Activated naive CD4-positive, alpha-beta T cell treated with anti-CD3 and anti-CD28 coated beads, Interleukin-2, amount 10 ng/mL, durations not matched to agents 7 days and 5 days (primary cell): ENCODE measurements at regions of chr14 and their contacts with region 1.

Region 1: DNA sequence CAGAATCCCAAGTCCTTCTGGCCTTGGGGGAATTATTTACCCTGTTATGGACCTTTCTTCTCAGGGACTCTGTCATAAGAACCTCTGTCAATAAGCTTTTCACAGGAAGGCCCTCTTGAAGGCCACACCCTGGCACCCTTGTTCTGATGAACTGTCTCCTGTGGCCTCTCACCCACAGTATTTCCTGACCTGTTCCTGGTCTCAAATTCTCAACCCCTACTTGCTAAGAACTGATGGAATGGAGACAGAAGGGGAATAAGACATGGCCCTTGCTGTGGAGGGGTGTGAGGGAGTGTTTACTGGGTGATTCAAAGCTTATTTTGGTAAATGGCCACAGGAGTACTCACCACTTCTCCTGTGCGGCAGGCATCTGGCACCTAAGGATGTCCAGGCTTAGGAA is 1082.9 kb downstream of the BCL11B start:
- DNase-seq: peak; percentile 60
- H3K4me3 Mint-ChIP-seq: peak overlapping the region; percentile 54
- H3K27ac Mint-ChIP-seq: peak overlapping the region; percentile 97
- H3K4me1 Mint-ChIP-seq: peaks cover 99% of the 10 kb centered on the region
- H3K27me3 Mint-ChIP-seq: no peaks in the 10 kb centered on the region

Region 2: DNA sequence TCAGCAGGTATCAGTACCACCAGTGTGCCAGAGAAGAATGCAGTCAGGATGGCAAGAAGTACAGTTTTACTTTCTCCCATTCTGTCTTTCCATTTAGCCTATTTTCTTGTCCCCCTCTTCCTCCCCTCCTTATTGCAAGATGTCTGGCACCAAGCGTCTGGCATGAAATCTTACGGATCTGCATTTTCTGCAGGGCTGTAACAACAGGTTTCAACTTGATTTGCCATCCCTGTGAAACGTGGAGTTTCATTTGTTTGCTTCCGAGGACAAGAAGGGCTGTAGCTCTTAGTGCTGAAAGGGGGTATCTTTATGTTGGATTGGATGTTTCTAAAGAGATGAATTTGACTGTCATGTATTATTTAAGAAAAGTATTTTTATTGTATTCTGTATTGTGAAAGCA is 27.7 kb before region 1 on chr14:
- CTCF ChIA-PET with region 1: no interaction called
- DNase-seq: no peak
- H3K4me3 Mint-ChIP-seq: no peak overlapping the region
- H3K27ac Mint-ChIP-seq: no peak overlapping the region
- H3K4me1 Mint-ChIP-seq: peaks cover 45% of the 10 kb centered on the region
- H3K27me3 Mint-ChIP-seq: no peaks in the 10 kb centered on the region

Region 3: GRCh38 chr14:98174041-98174440 is 15.0 kb before region 1 on chr14:
- CTCF ChIA-PET with region 1: interaction called, 13 read pairs
- DNase-seq: peak; percentile 42
- H3K4me3 Mint-ChIP-seq: no peak overlapping the region
- H3K27ac Mint-ChIP-seq: peak overlapping the region; percentile 90
- H3K4me1 Mint-ChIP-seq: peaks cover 97% of the 10 kb centered on the region
- H3K27me3 Mint-ChIP-seq: no peaks in the 10 kb centered on the region